HAP-1 (cell line): ENCODE measurements at regions of chr9 and their contacts with region 1.

Region 1: GRCh38 chr9:75071530-75072124 is 16.3 kb downstream of the NMRK1 start:
- DNase-seq: no peak
- H3K4me3 ChIP-seq: no peak overlapping the region
- H3K4me1 ChIP-seq: peaks cover 19% of the 10 kb centered on the region
- H3K27me3 ChIP-seq: no peaks in the 10 kb centered on the region

Region 2: GRCh38 chr9:74777136-74777879 is 294.3 kb before region 1 on chr9:
- in situ Hi-C with region 1: loop called (anchors 5 kb)
- DNase-seq: peak; percentile 40 to 76
- H3K4me3 ChIP-seq: no peak overlapping the region
- H3K4me1 ChIP-seq: no peaks in the 10 kb centered on the region
- H3K27me3 ChIP-seq: 0 out of 2 replicates have a peak, but pooled peaks cover 4% of the 10 kb centered on the region

Region 3: DNA sequence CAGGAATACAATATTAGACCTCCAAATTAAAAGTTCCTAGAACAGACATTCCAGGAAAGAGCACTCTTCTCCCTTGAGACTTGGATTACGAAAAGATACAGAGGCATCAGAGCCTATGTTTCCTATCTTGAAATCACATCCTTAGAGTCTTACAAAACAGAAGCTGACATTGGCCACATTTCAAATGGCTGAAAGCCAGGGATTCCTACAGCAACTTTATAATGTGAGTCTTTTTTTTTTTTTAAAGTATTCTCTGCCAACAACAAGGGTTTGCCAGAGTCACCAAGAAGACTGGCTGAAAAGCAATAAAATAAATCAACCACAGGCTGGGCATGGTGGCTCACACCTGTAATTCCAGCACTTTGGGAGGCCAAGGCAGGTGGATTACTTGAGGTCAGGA is 247.0 kb before region 1 on chr9:
- in situ Hi-C with region 1: no loop called
- DNase-seq: no peak
- H3K4me3 ChIP-seq: no peak overlapping the region
- H3K4me1 ChIP-seq: no peaks in the 10 kb centered on the region
- H3K27me3 ChIP-seq: no peaks in the 10 kb centered on the region

Region 4: DNA sequence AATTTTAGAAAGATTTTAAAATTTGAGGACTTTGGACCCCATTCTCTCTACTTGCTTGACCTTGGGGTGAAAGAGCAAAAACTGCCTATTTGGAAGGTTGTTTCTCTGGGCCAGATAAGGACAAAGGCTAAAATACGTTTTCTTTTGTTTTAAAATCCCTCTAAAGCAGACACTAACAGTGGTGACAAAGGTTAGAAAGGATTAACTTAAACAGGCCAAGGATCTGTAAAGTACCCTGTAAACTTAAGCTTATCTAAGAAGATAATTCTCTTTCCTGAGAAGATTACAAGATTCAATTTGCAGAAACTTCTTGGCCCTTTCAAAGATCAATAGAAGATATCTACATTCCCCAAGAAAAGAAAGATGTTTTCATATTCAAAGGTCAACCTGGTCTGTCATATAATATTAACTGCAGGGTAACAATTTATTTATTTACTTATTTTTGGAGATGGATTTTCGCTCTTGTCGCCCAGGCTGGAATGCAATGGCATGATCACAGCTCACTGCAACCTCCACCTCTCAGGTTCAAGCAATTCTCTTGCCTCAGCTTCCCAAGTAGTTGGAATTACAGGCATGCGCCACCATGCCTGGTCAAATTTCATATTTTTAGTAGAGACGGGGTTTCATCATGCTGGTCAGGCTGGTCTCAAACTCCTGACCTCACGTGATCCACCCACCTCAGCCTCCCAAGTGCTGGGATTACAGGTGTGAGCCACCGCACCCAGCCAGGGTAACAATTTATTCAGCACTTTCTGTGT is 195.8 kb before region 1 on chr9:
- in situ Hi-C with region 1: loop called (anchors 10 kb)
- DNase-seq: no peak
- H3K4me3 ChIP-seq: no peak overlapping the region
- H3K4me1 ChIP-seq: no peaks in the 10 kb centered on the region
- H3K27me3 ChIP-seq: no peaks in the 10 kb centered on the region

Region 5: DNA sequence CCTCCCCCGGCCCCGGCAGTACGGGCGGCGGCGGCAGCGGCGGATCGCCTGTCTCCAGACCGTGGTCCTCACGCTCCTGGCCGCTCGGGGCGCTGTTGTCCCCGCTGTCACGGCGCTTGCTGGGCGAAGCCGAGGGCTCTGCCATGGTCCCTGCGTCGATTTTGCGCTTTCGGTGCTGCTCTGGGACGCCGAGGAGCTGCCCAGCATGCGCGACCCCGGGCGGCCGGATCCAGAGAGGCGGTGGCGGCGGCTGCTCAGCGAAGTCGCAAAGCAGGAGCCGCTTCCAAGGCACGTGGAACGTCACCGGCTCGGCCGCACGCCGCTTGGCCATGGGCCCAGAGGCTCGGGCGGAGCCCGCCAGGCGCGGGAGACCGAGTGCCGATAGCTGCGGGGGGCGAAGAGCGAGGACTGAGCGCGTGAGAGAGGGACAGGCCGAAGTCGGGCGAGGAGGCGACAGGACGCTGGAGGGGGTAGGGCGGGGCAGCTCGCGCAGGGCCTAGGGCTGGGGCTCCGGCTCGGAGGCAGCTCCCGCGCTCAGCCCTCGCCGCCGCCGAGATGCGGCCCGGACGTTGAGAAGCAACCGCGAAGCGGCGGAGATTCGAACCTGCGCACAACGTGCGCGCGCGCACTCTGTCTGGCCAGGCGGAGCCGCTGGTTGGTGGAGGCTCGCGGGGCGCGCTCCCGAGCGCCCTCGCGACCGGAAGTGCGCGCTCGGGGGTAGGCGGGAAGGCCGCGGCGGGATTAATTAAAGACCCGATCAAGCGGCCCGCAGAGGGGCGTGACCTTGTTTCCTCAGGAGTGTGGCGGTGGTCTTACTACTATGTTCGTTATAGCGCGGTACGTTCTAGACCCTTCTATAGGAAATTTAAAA is 119.1 kb before region 1 on chr9 and contains the start of gene C9orf40:
- in situ Hi-C with region 1: loop called (anchors 10 kb)
- DNase-seq: peak; percentile 78 to 93
- H3K4me3 ChIP-seq: peak within 1 kb of the TSS; percentile 73
- H3K4me1 ChIP-seq: peaks cover 15% of the 10 kb centered on the region
- H3K27me3 ChIP-seq: no peaks in the 10 kb centered on the region

Region 6: DNA sequence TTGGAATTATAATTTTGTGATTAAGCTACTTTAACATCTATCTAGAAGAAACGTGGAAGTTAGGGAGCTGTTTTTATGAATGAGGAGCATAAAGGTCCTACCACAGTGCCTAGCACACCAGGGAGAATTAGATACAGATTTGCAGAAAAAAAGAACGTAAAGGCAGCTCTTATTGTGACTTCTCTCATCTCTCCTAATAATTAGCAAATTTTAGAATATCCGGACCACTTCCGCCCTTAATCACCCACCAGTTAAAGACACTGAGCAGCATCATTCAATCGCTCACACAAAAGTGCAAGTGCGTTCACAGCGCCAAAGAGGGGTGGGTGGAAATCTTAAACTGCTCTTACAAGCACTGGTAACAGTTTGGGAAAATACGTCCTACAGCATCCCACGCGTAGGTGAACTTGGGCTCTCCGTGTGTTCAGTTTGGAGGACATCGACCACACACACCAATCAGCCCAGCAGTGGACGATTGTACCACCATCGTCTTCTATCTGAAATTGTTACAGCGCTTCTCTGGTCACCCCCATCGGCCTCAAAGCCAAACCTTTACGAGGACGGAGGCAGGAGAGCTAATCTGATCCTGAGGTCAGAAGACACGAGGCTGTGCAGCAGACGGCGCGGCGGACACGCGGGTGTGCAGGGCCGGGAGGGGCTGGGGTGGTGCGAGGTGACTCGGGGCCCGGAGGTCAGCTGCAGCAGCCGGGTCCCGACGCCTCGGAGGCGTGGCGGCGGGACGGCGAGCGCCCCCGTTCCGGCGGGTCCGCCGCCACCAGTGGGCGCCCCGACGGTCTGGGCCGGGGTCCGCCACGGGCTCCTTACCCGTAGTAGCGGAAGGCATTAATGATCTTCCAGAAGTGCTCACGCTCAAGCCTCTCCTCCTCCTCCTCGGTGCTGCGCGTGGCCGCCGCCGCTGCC is 44.2 kb before region 1 on chr9:
- in situ Hi-C with region 1: loop called (anchors 10 kb)
- DNase-seq: peak; percentile 32 to 65
- H3K4me3 ChIP-seq: peak overlapping the region; percentile 56
- H3K4me1 ChIP-seq: peaks cover 13% of the 10 kb centered on the region
- H3K27me3 ChIP-seq: no peaks in the 10 kb centered on the region

Region 7: GRCh38 chr9:75130621-75131230 is 59.1 kb after region 1 on chr9:
- in situ Hi-C with region 1: loop called (anchors 10 kb)
- DNase-seq: no peak
- H3K4me3 ChIP-seq: no peak overlapping the region
- H3K4me1 ChIP-seq: no peaks in the 10 kb centered on the region; the same call in 1 of the 2 replicates
- H3K27me3 ChIP-seq: no peaks in the 10 kb centered on the region